Prostate gland (tissue), 2 donors: ENCODE measurements at regions of chrX and their contacts with region 1.

Region 1: GRCh38 chrX:11533211-11533651 is 132.5 kb downstream of the ARHGAP6 start:
- DNase-seq: peak; percentile 5
- H3K4me3 ChIP-seq: no peak overlapping the region
- H3K27ac ChIP-seq: no peak overlapping the region
- H3K4me1 ChIP-seq: no peaks in the 10 kb centered on the region
- H3K27me3 ChIP-seq: no peaks in the 10 kb centered on the region
- CTCF ChIP-seq: peak; percentile 34 to 96 (median 92)
- POLR2A ChIP-seq: no peak

Region 2: DNA sequence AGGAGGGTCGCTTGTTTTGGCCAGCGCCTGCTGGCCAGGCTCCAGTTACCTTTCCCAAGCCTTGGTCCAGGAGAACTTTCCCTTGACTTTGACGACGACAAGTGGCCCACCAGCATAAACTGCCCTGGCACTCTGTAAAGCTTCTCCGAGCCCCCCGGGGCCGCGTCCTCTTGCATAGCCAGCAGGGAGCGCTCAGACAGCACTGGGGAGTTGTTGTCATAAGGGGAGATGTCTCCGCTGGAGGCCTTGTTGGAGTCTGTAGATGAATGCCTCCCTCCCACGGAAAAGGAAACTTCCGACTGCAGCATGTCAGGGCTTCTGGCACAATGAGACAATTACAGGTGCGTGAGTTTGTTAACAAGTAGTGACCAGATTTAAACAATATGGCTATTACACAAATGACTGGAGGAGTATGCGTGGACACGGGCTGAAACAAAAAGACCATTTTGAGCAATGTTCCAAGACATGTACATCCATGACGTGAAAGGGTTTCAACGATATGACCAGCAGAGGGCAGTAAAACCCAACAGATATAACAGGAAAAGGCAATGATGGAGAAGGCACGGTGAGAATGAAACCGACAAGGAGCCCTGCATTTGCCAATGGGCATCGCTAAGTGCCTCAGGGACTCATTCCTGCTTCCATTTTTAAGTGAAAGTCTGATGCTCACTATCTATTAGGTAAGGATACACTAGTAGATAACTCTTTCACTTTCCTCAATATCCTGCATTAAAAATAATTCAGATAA is 389.1 kb before region 1 on chrX:
- intact Hi-C with region 1: loop called (anchors 2 kb)
- DNase-seq: peak; percentile 68
- H3K4me3 ChIP-seq: no peak overlapping the region
- H3K27ac ChIP-seq: no peak overlapping the region
- H3K4me1 ChIP-seq: no peaks in the 10 kb centered on the region
- H3K27me3 ChIP-seq: no peaks in the 10 kb centered on the region
- CTCF ChIP-seq: peak in 3 of 4 experiments; percentile 57 to 69 (median 63)
- POLR2A ChIP-seq: no peak

Region 3: DNA sequence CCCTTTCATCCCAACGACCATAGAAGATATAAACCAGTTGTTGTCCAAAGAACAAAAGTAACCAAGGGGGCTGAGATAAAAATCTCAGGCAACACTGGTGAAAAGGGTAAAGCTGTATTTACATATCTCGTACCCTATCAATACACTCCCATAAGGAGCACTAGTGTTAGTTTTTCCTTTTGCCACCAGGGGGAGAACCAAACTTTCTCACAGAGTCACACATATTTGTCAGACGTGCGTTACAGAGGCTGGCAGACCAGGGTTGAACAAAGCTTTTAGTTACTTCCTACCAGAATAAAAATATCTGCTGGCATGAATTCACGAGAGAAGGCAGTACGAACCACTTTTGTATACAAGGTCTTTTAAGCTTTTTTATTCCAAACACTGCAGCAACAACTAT is 151.8 kb before region 1 on chrX:
- intact Hi-C with region 1: loop called (anchors 5 kb)
- DNase-seq: peak; percentile 50
- H3K4me3 ChIP-seq: no peak overlapping the region
- H3K27ac ChIP-seq: peak overlapping the region in 1 of 2 donors; percentile 38
- H3K4me1 ChIP-seq: no peaks in the 10 kb centered on the region
- H3K27me3 ChIP-seq: no peaks in the 10 kb centered on the region
- CTCF ChIP-seq: peak; percentile 26 to 63 (median 48)
- POLR2A ChIP-seq: no peak

Region 4: DNA sequence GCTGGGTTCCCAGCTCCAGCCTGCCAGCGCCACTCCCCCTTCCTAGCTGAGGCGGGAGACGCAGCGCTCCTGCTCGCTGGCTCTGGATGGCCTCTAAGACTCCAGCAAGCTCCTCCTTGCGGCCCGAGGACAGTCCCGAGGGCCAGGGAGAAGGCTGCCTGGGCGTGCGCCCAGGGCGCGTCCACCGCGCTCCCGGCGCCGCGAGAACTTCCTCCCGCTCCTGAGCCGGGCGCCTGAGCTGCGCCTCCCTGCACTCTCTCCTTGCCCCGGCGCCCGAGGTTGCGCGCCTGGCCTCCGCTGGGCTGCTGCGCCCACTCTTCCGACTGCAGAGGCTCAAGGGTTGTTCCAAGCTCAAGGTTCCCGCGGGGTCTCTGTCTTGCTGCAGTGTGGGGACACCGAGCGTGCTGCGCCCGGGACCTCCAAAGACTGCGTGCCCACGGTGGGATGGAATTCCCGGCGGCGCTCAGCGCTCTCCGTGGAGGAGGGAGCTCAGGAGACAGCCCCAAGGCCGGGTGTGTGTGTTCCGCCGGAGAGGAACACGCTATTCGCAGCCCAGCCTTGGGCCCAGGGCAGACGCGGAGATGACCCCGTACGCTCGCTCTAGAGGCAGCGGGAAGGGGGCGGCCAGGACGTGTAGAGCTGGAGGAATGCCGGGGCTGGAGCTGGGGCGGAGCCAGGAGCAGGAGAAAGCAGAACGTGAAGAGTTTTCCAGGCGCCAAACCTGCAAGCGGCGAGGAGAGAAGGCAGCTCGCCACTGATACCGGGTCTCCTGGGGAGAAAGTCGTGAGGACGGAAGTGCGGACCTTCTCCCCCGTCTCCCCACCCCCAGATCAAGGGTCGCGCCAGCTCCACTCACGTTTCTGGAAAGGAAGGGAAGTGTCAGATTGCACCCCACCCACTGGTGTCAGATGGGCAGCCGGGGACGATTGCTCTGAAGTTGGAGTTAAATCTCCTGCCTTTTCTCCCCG is 132.2 kb after region 1 on chrX and contains the start of gene ARHGAP6:
- intact Hi-C with region 1: loop called (anchors 10 kb)
- DNase-seq: no peak
- H3K4me3 ChIP-seq: peak within 1 kb of the TSS; percentile 28
- H3K27ac ChIP-seq: peak within 1 kb of the TSS; percentile 15 to 39
- H3K4me1 ChIP-seq: no peaks in the 10 kb centered on the region
- H3K27me3 ChIP-seq: no peaks in the 10 kb centered on the region
- CTCF ChIP-seq: no peak
- POLR2A ChIP-seq: no peak
- total RNA-seq, gene ARHGAP6: 72.6 to 73.7 TPM

Region 5: DNA sequence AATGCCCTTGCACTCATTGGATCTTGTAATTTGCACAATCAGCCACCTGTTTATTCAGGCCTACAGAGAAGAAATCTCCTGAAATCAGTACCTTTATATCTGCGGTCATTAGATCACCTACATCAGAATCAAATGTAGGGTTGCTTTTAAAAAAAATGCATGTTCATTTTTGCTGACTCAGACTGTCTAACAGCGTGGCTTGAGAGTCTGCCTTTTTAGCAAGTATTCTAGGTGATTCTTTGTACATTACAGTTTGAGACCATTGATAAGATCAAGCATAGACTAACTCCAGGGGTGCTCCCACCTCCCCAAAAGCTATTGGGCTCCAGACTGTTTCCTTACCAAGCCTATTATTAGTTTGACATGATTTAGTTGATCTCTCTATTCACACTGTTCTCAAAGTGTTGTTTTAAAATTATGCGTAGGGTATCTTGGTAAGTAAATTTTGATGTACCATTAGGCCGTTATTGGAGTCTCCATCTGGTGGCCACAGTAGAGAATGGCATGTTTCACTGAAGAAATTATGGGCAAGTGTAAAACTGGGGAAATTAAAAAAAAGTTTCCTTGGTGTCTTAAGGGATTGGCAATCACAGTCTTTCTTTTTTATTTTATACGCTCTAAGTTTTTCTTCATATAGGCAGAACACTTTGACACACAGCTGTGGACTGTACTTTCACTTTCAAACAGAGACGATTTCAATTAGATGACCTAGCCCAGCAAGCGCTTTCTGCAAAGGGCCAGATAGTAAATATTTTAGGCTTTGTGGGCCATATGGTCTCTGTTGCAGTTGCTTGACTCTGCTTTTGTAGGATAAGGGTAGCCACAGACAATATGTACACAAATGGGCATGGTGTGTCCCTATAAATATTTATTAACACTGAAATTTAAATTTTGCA is 191.1 kb after region 1 on chrX:
- intact Hi-C with region 1: loop called (anchors 2 kb)
- DNase-seq: peak; percentile 4
- H3K4me3 ChIP-seq: no peak overlapping the region
- H3K27ac ChIP-seq: no peak overlapping the region
- H3K4me1 ChIP-seq: no peaks in the 10 kb centered on the region
- H3K27me3 ChIP-seq: no peaks in the 10 kb centered on the region
- CTCF ChIP-seq: peak; percentile 14 to 63 (median 44)
- POLR2A ChIP-seq: no peak

Region 6: GRCh38 chrX:11770320-11770719 is 237.1 kb after region 1 on chrX:
- intact Hi-C with region 1: loop called (anchors 5 kb)
- DNase-seq: peak; percentile 14
- H3K4me3 ChIP-seq: no peak overlapping the region
- H3K27ac ChIP-seq: no peak overlapping the region
- H3K4me1 ChIP-seq: no peaks in the 10 kb centered on the region
- H3K27me3 ChIP-seq: no peaks in the 10 kb centered on the region
- CTCF ChIP-seq: peak; percentile 21 to 72 (median 62)
- POLR2A ChIP-seq: no peak